Activated CD8-positive, alpha-beta memory T cell treated with anti-CD3 and anti-CD28 coated beads, Interleukin-2, amount 10 ng/mL, durations not matched to agents 7 days and 5 days (primary cell): ENCODE measurements at regions of chr20 and their contacts with region 1.

Region 1: GRCh38 chr20:37534401-37535157 is 6.9 kb upstream of the BLCAP start:
- DNase-seq: peak; percentile 50
- ATAC-seq: peak; percentile 76
- H3K4me3 Mint-ChIP-seq: no peak overlapping the region
- H3K27ac Mint-ChIP-seq: no peak overlapping the region
- H3K4me1 Mint-ChIP-seq: peaks cover 10% of the 10 kb centered on the region
- H3K27me3 Mint-ChIP-seq: peaks cover 12% of the 10 kb centered on the region

Region 2: DNA sequence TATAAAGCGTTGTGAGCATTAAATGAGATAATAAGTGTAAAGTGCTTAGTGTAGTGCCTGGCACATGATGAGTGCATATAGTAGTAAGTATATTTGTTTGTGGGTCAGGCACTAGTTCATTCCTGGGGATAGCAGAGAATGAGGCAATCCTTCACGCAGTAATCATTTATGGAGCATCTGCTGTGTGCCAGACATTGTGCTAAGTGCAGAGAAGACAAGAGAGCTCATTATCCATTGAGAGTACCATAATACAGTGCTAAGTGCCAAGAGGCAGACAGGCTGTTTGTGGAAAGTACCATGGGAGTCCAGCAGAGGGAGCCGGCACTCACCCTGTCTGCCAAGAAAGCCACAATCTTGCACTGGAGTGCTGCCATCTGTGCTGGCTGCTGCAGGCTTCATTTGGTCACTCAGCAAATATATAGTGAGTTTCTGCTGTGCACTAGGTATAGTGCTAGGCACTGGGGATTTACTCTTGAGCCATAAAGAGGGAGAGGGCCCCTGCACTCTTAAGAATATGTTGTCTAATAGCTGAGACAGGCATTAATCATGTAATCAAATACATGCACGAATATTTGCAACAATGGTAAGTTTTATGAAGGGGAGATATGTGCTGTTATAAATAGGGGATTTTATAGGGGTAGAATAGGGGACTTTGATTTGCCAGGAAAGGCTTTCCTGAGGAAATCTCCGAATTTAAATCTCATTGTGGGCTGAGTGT is 342.3 kb before region 1 on chr20:
- CTCF ChIA-PET with region 1: interaction called, 36 read pairs
- DNase-seq: peak; percentile 80
- ATAC-seq: peak; percentile 79
- H3K4me3 Mint-ChIP-seq: no peak overlapping the region
- H3K27ac Mint-ChIP-seq: peak overlapping the region; percentile 8
- H3K4me1 Mint-ChIP-seq: peaks cover 64% of the 10 kb centered on the region
- H3K27me3 Mint-ChIP-seq: no peaks in the 10 kb centered on the region

Region 3: GRCh38 chr20:37270576-37271420 is 263.8 kb before region 1 on chr20:
- CTCF ChIA-PET with region 1: interaction called, 25 read pairs
- DNase-seq: no peak
- ATAC-seq: no peak
- H3K4me3 Mint-ChIP-seq: no peak overlapping the region
- H3K27ac Mint-ChIP-seq: no peak overlapping the region
- H3K4me1 Mint-ChIP-seq: peaks cover 9% of the 10 kb centered on the region
- H3K27me3 Mint-ChIP-seq: no peaks in the 10 kb centered on the region

Region 4: DNA sequence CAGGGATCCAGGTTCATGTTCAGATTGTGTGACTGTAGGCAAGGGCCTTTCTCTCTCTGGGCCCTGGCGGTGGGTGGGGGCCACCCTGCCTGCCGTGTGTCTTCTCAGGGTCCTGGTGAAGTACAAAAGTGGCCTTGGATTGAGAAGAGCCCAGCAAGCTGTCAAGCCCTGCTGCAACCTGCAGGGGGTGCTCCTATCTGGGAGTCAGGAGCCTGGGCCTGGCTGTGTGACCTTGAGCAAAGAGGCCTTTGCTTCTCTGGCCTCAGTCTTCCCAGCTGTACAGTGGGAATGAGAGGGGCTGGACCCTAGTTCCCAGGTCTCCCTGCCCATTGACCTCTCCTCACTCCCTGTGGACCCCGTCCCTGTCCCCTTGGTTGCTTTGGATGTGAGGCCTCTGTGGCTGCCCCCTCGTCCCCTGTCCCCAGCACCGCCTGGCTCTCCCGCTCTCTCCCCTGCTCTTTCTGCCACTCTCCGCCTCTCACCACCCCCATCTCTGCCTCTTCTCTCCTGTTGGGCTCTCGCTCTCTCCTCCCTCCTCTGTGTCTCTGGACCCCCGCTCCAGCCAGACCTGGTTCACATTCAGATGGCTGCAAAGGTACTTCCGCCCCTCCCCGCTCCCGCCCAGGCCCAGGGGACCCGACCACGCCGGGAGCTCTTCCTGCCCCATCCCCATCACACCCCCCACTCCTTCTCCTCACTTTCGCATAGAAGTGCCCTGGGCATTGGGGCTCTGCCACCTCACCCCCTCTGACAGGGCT is 142.0 kb before region 1 on chr20:
- CTCF ChIA-PET with region 1: interaction called, 17 read pairs
- DNase-seq: no peak
- ATAC-seq: no peak
- H3K4me3 Mint-ChIP-seq: no peak overlapping the region
- H3K27ac Mint-ChIP-seq: no peak overlapping the region
- H3K4me1 Mint-ChIP-seq: no peaks in the 10 kb centered on the region
- H3K27me3 Mint-ChIP-seq: no peaks in the 10 kb centered on the region